ENCODE measurements at regions of chrX and their contacts with region 1.

Region 1: DNA sequence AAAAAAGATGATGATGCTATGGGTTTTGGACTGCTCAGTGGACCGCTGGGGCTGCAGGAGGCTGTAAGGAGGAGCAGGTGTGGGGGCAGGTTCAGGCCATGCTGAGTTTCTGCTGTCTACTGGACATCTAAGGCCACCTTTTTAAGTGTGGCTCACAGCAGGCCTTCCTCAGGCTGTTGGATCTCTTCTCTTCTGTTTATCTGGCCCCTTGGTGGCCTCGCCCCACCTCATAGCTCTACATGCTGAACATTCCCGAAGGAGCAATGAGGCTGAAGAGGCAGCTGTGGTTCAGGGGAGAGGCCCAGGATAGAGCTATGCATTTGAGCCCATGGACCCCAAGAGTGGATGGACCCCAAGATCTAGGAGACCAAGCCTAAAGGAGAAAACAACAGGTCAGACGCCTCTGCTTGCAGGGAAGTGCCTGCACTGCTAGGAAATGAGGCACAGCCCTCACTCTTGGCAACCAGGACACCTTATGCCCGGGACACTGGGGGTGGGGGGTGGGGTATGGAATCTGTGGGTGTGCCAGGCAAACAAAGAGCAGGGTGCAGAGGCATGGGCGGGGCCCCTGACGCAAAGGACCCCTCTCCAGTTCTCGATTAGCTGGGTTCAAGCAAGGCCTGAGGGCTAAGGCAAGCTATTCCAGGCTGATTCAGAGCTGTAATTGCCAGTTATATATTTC is 168.9 kb downstream of the BCOR start:
- DNase-seq: no peak

Region 2: GRCh38 chrX:39953883-39954282 is 25.0 kb after region 1 on chrX:
- CTCF ChIA-PET with region 1: no interaction called
- POLR2A ChIA-PET with region 1: no interaction called
- DNase-seq: peak; percentile 41

Region 3: GRCh38 chrX:40227125-40227524 is 298.3 kb after region 1 on chrX:
- CTCF ChIA-PET with region 1: interaction called, 10 read pairs
- POLR2A ChIA-PET with region 1: no interaction called
- DNase-seq: no peak

Measured in HEK293T (cell line).